ENCODE measurements at regions of chr14 and their contacts with region 1.

Region 1: DNA sequence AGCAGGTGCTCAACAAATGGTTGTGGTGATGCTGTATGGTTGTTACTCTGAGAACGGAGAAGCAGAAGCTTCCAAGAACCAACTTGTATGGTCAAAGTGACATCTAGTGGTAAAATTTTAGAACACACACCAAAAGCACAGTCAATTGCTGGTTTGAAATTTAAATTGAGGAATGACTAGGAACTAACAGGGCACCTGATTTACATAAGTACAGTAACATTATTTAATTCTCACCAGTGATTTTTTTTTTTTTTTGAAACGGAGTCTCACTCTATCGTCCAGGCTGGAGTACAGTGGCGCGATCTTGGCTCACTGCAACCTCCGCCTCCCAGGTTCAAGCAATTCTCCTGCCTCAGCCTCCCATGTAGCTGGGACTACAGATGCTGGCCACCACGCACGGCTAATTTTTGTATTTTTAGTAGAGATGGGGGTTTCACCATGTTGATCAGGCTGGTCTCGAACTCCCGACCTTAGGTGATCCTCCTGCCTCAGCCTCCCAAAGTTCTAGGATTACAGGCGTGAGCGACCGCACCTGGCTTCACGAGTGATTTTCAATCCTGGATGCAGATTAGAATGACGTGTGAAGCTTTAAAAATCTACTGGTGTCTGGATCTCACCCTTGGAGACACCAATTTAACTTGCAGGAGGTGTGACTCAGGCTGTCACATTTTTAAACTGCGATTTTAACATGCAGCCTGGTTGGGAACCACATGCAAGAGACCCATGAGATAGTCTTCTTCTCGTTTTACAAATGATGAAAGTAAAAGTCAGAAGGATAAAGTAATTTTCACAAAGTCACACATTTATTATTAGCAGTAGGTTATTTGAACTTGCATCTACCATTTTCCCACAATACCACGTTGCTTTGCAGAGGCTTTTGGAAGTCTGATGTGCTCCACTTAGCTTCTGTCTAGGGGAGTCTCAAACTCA is 14.1 kb upstream of the NUMB start:
- DNase-seq: no peak
- ATAC-seq: peak; percentile 80

Region 2: GRCh38 chr14:73173092-73173735 is 299.2 kb before region 1 on chr14:
- intact Hi-C with region 1: loop called (anchors 5 kb)
- DNase-seq: no peak
- ATAC-seq: no peak

Region 3: GRCh38 chr14:73295198-73295796 is 177.2 kb before region 1 on chr14:
- intact Hi-C with region 1: loop called (anchors 1 kb)
- DNase-seq: no peak
- ATAC-seq: no peak

Region 4: DNA sequence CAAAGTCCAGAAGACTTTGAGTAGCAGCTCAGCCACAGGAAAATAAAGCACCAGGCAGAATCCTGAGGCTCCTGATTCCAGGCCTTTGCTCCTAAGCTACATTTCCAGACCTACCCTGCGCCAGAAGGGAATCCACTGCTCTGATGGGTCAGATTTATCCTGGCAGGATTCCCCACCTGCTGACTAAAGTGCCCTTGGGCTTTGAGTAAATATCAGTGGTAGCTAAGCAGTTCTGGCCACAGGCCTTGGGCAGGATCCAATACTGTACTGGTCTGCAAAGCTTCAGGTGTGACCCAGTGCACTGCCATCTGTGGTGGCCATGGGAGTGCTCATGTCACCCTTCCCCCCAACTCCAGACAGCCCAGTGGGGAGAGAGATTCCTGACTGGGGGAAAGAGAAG is 54.1 kb after region 1 on chr14:
- intact Hi-C with region 1: no loop called
- DNase-seq: no peak
- ATAC-seq: peak; percentile 88

Region 5: GRCh38 chr14:73610687-73611086 is 138.2 kb after region 1 on chr14:
- intact Hi-C with region 1: no loop called
- DNase-seq: no peak
- ATAC-seq: no peak

Measured in Right ventricle myocardium inferior (tissue), 1 donor.